ENCODE measurements at regions of chr3 and their contacts with region 1.

Region 1: GRCh38 chr3:196609343-196609775 is 30.1 kb upstream of the NRROS start:
- DNase-seq: peak; percentile 93
- ATAC-seq: peak; percentile 98
- H3K4me3 ChIP-seq: no peak overlapping the region
- H3K27ac ChIP-seq: no peak overlapping the region
- H3K4me1 ChIP-seq: peaks cover 15% of the 10 kb centered on the region; the same call in 1 of the 2 replicates
- H3K27me3 ChIP-seq: no peaks in the 10 kb centered on the region
- CTCF ChIP-seq: peak; percentile 98

Region 2: GRCh38 chr3:196537319-196537984 is 71.9 kb before region 1 on chr3:
- CTCF ChIA-PET with region 1: no interaction called
- POLR2A ChIA-PET with region 1: no interaction called
- intact Hi-C with region 1: loop called (anchors 5 kb)
- DNase-seq: peak; percentile 64
- ATAC-seq: peak; percentile 50
- H3K4me3 ChIP-seq: no peak overlapping the region
- H3K27ac ChIP-seq: no peak overlapping the region
- H3K4me1 ChIP-seq: no peaks in the 10 kb centered on the region
- H3K27me3 ChIP-seq: no peaks in the 10 kb centered on the region
- CTCF ChIP-seq: peak; percentile 84

Region 3: GRCh38 chr3:196684548-196685407 is 75.4 kb after region 1 on chr3:
- CTCF ChIA-PET with region 1: interaction called, 22 read pairs
- POLR2A ChIA-PET with region 1: no interaction called
- intact Hi-C with region 1: loop called (anchors 1 kb)
- DNase-seq: peak; percentile 80
- ATAC-seq: peak; percentile 88
- H3K4me3 ChIP-seq: 0 out of 2 replicates have a peak overlapping the region, but pooled peaks have one; percentile 21
- H3K27ac ChIP-seq: no peak overlapping the region
- H3K4me1 ChIP-seq: no peaks in the 10 kb centered on the region
- H3K27me3 ChIP-seq: 0 out of 2 replicates have a peak, but pooled peaks cover 3% of the 10 kb centered on the region
- CTCF ChIP-seq: peak; percentile 88

Region 4: GRCh38 chr3:196694941-196695848 is 85.8 kb after region 1 on chr3:
- CTCF ChIA-PET with region 1: interaction called, 10 read pairs
- POLR2A ChIA-PET with region 1: no interaction called
- intact Hi-C with region 1: no loop called
- DNase-seq: no peak
- ATAC-seq: no peak
- H3K4me3 ChIP-seq: no peak overlapping the region
- H3K27ac ChIP-seq: no peak overlapping the region
- H3K4me1 ChIP-seq: no peaks in the 10 kb centered on the region
- H3K27me3 ChIP-seq: no peaks in the 10 kb centered on the region
- CTCF ChIP-seq: no peak

Region 5: DNA sequence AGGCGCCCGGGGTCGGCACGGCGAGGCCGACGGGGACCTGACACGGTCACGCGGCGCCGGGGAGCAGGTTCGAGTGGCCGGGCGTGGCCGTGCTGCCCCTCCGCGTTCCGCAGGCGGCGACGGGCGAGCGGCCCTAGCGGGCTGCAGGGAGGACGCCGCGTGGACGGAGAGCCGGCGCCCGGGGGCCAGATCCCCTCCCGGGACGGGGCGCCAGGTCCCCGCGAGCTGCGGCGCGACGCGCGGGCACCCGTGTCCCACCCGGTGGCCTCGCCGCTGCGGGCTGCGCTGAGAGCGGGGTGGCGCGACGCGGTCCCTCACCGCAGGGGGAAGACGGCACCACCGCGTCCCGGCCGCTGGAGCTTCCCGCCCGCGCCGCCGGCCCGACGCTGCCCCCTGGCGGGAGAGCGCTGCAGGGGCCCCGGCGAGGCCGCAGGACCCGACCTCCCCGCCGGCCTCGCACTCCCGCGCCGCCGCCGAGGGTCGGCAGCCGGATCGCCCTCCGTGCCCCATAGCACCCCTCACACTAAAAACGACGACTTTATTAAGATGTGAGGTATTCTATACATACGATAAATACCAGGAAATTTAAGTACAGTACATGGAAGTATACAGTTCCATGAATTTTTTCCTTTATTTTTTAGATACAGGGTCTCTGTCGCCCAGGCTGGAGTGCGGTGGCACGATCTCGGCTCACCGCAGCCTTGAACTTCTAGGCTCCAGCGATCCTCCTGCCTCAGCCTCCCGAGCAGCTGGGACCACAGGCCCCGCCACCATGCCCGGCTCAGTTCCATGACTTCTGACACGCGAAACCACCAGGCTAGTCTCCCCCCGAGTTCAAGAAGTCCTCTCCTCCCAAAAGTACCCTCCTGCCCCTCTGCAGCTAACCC is 360.5 kb after region 1 on chr3:
- CTCF ChIA-PET with region 1: interaction called, 3 read pairs
- POLR2A ChIA-PET with region 1: interaction called, 3 read pairs
- intact Hi-C with region 1: loop called (anchors 1 kb)
- DNase-seq: peak; percentile 76
- ATAC-seq: peak; percentile 77
- H3K4me3 ChIP-seq: peak overlapping the region; percentile 93
- H3K27ac ChIP-seq: no peak overlapping the region
- H3K4me1 ChIP-seq: peaks cover 6% of the 10 kb centered on the region; the same call in 1 of the 2 replicates
- H3K27me3 ChIP-seq: no peaks in the 10 kb centered on the region
- CTCF ChIP-seq: peak; percentile 64